ENCODE measurements at regions of chr3 and their contacts with region 1.

Region 1: DNA sequence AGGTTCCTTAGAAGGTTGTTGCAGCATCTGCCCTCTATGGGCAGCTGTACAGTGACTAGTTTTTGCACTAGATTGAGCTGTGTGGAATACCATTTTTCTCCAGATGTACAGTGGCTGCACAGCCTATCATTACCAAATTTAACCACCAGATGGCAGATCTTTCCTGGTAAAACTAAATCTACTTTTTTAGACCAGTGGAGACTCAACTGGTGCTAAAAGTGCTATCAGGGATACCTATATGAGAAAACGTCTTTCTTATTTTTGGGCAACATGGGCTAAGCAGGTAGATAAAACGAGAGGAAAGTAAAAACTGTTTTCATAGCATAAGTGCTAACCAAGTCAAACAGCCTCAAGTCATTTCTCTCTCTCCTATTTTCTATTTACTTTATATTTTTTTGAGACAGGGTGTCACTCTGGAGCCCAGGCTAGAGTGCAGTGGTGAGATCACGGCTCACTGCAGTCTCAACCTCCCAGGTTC is 21.2 kb downstream of the IGSF10 start:
- DNase-seq: peak in 2 of 9 experiments; percentile 43 to 52
- ATAC-seq: no peak
- H3K4me3 ChIP-seq: no peak overlapping the region
- H3K4me3 Mint-ChIP-seq: no peak overlapping the region
- H3K27ac ChIP-seq: no peak overlapping the region
- H3K27ac Mint-ChIP-seq: no peak overlapping the region
- H3K4me1 ChIP-seq: no peaks in the 10 kb centered on the region
- H3K4me1 Mint-ChIP-seq: no peaks in the 10 kb centered on the region
- H3K27me3 ChIP-seq: peaks cover 0 to 4% of the 10 kb centered on the region in 2 experiments
- H3K27me3 Mint-ChIP-seq: peaks cover 5% of the 10 kb centered on the region
- CTCF ChIP-seq: peak; percentile 62

Region 2: DNA sequence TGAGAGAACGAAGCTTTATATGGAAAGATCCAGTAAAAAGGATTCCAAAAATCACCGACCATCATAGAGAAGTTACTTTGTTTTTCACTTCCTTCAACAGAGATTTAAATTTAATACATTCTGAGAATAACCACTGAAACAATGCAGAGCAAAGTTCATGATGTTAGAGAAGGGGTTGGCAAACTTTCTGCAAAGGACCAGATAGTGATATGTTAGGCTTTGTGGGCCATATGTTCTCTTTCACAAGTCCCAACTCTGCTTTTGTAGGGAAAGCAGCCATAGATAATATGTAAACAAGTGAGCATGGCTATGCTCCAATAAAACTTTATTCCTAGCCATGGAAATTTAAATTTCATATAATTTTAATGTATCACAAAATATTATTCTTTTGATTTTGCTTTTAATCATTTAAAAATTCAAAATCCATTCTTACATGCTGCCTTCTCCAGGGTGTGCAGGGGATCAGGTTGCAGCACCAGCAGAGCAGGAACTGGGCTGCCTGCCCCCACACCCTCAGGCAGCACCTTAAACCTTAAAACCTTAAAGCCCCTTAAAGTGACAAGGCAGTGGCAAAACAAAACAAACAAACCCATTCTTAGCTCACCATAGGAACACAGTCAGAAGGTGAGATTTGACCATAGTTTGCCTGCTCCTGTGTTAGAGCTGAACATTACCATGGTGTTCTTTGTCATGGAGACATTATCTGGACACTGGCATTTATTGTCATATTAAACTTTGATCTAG is 38.1 kb after region 1 on chr3:
- CTCF ChIA-PET with region 1: no interaction called
- POLR2A ChIA-PET with region 1: no interaction called
- intact Hi-C with region 1: no loop called
- DNase-seq: no peak
- ATAC-seq: no peak
- H3K4me3 ChIP-seq: no peak overlapping the region
- H3K4me3 Mint-ChIP-seq: no peak overlapping the region
- H3K27ac ChIP-seq: no peak overlapping the region
- H3K27ac Mint-ChIP-seq: no peak overlapping the region
- H3K4me1 ChIP-seq: no peaks in the 10 kb centered on the region
- H3K4me1 Mint-ChIP-seq: no peaks in the 10 kb centered on the region
- H3K27me3 ChIP-seq: no peaks in the 10 kb centered on the region
- H3K27me3 Mint-ChIP-seq: no peaks in the 10 kb centered on the region
- CTCF ChIP-seq: no peak

Region 3: DNA sequence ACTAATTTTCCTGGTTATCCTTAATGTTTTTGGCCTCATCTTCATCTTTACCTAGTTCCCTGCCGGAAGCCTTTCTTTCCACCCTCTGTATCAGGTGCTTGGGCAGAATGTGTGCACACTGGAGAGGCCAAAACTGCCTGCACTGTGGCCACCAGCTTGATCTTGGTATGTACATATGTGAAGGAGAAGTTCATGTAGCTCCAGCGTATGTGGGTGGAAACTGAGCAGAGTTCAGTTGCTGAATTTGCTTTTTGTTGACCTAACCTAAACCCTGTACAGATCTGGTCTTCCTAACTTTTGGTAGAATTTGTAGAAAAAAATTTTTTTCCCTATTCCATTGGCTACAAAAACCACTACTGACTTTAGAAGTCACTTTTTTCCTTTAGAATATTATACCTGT is 87.1 kb after region 1 on chr3:
- CTCF ChIA-PET with region 1: no interaction called
- POLR2A ChIA-PET with region 1: no interaction called
- intact Hi-C with region 1: no loop called
- DNase-seq: no peak
- ATAC-seq: no peak
- H3K4me3 ChIP-seq: no peak overlapping the region
- H3K4me3 Mint-ChIP-seq: no peak overlapping the region
- H3K27ac ChIP-seq: no peak overlapping the region
- H3K27ac Mint-ChIP-seq: no peak overlapping the region
- H3K4me1 ChIP-seq: no peaks in the 10 kb centered on the region
- H3K4me1 Mint-ChIP-seq: no peaks in the 10 kb centered on the region
- H3K27me3 ChIP-seq: no peaks in the 10 kb centered on the region
- H3K27me3 Mint-ChIP-seq: peaks cover 2% of the 10 kb centered on the region
- CTCF ChIP-seq: no peak

Region 4: GRCh38 chr3:151838583-151839312 is 399.1 kb after region 1 on chr3:
- CTCF ChIA-PET with region 1: interaction called, 3 read pairs
- POLR2A ChIA-PET with region 1: no interaction called
- intact Hi-C with region 1: loop called in 1 of 2 experiments (anchors 5 kb)
- DNase-seq: peak in 5 of 9 experiments; percentile 2 to 63 (median 30)
- ATAC-seq: peak; percentile 49
- H3K4me3 ChIP-seq: no peak overlapping the region
- H3K4me3 Mint-ChIP-seq: no peak overlapping the region
- H3K27ac ChIP-seq: no peak overlapping the region
- H3K27ac Mint-ChIP-seq: no peak overlapping the region
- H3K4me1 ChIP-seq: no peaks in the 10 kb centered on the region
- H3K4me1 Mint-ChIP-seq: no peaks in the 10 kb centered on the region
- H3K27me3 ChIP-seq: peaks cover 0 to 2% of the 10 kb centered on the region in 2 experiments
- H3K27me3 Mint-ChIP-seq: peaks cover 9% of the 10 kb centered on the region
- CTCF ChIP-seq: peak; percentile 59

Region 5: GRCh38 chr3:151918253-151919029 is 478.8 kb after region 1 on chr3:
- CTCF ChIA-PET with region 1: interaction called, 14 read pairs
- POLR2A ChIA-PET with region 1: no interaction called
- intact Hi-C with region 1: loop called (anchors 1 kb)
- DNase-seq: peak in 2 of 9 experiments; percentile 46 to 64
- ATAC-seq: no peak
- H3K4me3 ChIP-seq: no peak overlapping the region
- H3K4me3 Mint-ChIP-seq: no peak overlapping the region
- H3K27ac ChIP-seq: no peak overlapping the region
- H3K27ac Mint-ChIP-seq: no peak overlapping the region
- H3K4me1 ChIP-seq: no peaks in the 10 kb centered on the region
- H3K4me1 Mint-ChIP-seq: no peaks in the 10 kb centered on the region
- H3K27me3 ChIP-seq: no peaks in the 10 kb centered on the region
- H3K27me3 Mint-ChIP-seq: no peaks in the 10 kb centered on the region
- CTCF ChIP-seq: peak; percentile 63

Region 6: DNA sequence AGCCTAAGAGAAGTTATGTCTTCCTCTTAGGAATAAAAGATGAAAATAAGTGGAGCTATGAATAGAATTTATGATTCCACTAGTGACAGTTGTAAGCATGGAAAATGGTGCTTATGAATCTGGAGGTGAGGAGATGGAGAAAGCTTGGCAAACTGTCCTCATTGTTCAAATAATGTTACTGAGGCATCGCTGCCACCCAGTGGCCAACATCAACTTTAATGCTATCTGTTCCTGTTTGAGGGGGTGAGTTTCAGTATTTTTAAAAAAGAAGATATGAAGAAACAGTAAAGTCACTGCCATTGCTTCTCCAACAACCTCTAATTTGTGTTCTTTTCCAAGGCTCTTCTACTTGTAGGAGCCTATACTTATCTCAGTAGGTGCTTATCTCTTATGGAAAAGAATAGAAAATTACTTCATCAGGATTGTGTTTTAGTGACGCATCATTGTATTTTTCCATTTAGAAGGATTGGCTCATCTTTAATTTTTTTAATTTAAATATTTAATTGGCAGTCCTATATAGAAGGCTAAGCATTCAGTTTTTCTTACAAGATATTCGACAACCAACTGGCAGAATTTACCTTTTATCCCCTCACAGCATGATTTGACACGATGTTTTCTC is 1134.9 kb after region 1 on chr3:
- CTCF ChIA-PET with region 1: no interaction called
- POLR2A ChIA-PET with region 1: no interaction called
- intact Hi-C with region 1: loop called in 1 of 2 experiments (anchors 1 kb)
- DNase-seq: peak in 5 of 9 experiments; percentile 17 to 43 (median 19)
- ATAC-seq: no peak
- H3K4me3 ChIP-seq: no peak overlapping the region
- H3K4me3 Mint-ChIP-seq: no peak overlapping the region
- H3K27ac ChIP-seq: no peak overlapping the region
- H3K27ac Mint-ChIP-seq: no peak overlapping the region
- H3K4me1 ChIP-seq: no peaks in the 10 kb centered on the region
- H3K4me1 Mint-ChIP-seq: no peaks in the 10 kb centered on the region
- H3K27me3 ChIP-seq: no peaks in the 10 kb centered on the region
- H3K27me3 Mint-ChIP-seq: peaks cover 4% of the 10 kb centered on the region
- CTCF ChIP-seq: peak; percentile 43